ENCODE measurements at regions of chr2 and their contacts with region 1.

Region 1: DNA sequence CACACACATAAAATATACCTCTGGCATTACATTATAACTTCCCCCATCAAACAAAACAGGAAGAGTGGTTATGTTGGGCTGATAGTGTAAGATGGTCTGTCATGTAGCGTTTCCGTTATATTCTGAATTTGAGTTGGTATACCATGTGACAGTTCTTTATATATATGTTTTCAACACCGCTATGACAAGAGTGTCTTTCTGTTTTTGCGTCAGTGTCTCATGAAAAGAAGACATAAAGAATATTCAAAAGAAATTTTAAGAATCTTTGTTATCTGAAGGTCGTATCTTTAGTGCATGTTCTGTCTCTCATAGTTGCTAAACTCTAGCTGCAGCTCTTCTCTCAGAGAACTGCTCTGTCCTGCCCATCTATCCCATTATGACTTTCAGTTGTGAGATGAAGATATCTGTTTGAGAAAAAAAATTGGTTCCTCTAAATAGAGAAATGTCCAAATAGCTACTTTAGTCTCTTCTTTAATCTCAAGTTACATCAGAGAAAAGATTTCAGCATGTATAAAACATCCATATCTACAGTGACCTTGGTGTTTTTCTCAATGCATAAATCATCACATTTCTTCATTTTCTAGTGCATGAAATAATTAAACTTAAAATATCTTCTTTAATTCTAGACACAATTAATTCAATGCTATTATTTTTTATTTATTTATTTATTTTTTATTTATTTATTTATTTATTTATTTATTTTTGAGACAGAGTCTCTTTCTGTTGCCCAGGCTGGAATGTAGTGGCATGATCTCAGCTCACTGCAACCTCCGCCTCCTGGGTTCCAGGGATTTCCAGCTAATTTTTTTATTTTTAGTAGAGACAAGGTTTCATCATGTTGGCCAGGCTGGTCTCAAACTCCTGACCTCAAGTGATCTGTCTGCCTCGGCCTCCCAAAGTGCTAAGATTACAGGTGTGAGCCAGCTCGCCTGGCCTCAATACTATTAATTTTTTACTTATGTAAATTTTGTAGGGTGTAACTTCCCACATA is 24.3 kb upstream of the PSME4 start:
- DNase-seq: peak in 2 of 5 donors; percentile 85
- H3K4me3 ChIP-seq: peak overlapping the region; percentile 43
- H3K4me3 Mint-ChIP-seq: peak overlapping the region; percentile 44 to 79 (median 71)
- H3K27ac ChIP-seq: peak overlapping the region; percentile 62
- H3K27ac Mint-ChIP-seq: peak overlapping the region; percentile 66 to 98 (median 90)
- H3K4me1 ChIP-seq: peaks cover 54% of the 10 kb centered on the region
- H3K4me1 Mint-ChIP-seq: peaks cover 25 to 34% (median 30%) of the 10 kb centered on the region in 3 donors
- H3K27me3 ChIP-seq: no peaks in the 10 kb centered on the region
- H3K27me3 Mint-ChIP-seq: no peaks in the 10 kb centered on the region

Region 2: DNA sequence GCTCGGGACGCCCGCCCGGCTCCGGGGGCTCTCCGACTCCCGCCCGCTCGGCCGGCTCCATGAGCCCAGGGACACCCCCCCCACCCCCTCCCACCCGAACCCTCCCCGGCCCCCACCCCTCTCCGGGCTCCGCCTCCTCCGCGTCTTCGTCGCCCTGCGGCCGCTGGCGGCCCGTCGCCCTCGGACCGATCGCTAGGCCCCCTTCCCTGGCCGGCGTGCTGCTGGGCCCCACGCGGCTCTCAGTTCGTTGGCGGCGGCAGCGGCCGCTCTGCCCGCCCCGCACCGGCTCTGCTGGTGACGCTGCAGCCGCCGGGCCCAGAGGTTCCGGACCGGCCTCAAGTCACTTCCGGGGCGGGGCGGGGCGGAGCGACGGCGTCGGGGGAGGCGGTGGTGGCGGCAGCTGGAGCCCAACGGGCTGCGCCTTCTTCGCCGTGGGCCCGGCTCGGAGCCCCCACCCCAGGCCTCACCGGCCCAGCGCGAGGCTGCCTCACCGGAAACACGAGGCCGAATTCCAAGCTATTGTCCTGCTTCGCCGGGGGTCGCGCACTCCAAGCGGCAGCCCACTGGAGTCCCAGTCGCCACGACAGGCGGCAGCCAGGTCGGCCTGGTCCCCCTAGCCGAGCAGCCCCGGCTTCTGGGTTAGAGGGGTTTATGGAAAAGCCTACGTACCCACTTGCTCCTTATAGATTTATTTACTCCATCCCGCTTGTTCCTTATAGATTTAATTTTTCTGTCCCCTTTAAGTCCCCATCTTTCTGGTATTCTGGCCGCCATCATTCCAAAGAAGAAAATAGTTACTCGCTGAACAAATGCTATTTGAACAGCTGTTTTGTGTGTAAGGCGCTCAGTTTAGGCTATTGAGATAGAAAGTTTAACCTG is 24.1 kb before region 1 on chr2 and contains the start of gene PSME4:
- CTCF ChIA-PET with region 1: interaction called, 9 read pairs
- POLR2A ChIA-PET with region 1: interaction called, 23 read pairs
- DNase-seq: peak; percentile 88 to 95 (median 92)
- H3K4me3 ChIP-seq: peak within 1 kb of the TSS; percentile 87
- H3K4me3 Mint-ChIP-seq: peak within 1 kb of the TSS; percentile 89 to 97 (median 94)
- H3K27ac ChIP-seq: peak within 1 kb of the TSS; percentile 92
- H3K27ac Mint-ChIP-seq: peak within 1 kb of the TSS; percentile 94 to 99 (median 96)
- H3K4me1 ChIP-seq: peaks cover 38% of the 10 kb centered on the region
- H3K4me1 Mint-ChIP-seq: peaks cover 53 to 63% (median 56%) of the 10 kb centered on the region in 3 donors
- H3K27me3 ChIP-seq: no peaks in the 10 kb centered on the region
- H3K27me3 Mint-ChIP-seq: no peaks in the 10 kb centered on the region
- total RNA-seq, gene PSME4: 48.0 to 49.9 TPM

Region 3: DNA sequence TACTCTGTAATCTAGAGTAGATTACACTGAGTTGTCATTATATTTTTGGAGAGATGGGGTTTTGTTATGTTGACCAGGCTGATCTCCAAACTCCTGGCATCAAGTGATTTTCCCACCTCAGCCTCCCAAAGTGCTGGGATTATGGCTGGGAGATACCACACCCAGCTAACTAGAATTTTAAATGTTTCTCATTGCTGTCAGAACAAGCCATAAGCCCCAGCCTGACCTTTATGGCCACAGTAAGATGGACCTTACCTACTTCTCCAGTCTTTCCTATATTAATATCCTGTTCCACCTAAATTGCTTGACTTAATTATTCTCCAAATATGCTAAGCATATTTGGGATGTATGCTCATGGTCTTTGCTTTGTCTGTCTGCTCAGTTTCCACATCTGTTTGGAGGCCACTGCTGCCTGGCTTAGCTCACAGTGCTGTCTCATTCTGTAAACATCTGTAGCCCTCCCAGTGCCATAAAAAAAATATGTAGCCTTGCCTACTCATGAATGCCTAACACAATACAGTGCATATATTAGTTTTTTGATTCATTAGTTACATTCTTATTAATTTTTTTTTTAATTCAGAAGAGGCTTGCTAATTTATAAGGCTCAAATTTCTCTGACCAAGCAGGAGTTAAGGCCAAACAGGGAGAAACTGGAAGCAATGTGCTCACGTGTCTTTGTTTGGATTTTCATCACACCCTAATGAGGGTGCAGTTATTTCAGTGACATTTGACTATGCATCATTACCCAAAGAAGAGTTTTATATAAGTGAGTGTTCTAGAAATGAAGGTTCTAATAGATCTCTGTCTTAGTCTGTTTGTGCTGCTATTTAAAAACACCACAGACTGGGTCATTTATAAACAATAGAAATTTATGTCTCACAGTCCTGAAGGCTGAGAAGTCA is 20.9 kb after region 1 on chr2:
- CTCF ChIA-PET with region 1: interaction called, 6 read pairs
- POLR2A ChIA-PET with region 1: interaction called, 10 read pairs
- DNase-seq: no peak
- H3K4me3 ChIP-seq: no peak overlapping the region
- H3K4me3 Mint-ChIP-seq: no peak overlapping the region
- H3K27ac ChIP-seq: no peak overlapping the region
- H3K27ac Mint-ChIP-seq: peak overlapping the region in 6 of 8 donors; percentile 7 to 77 (median 62)
- H3K4me1 ChIP-seq: peaks cover 22% of the 10 kb centered on the region
- H3K4me1 Mint-ChIP-seq: peaks cover 26 to 36% (median 27%) of the 10 kb centered on the region in 3 donors
- H3K27me3 ChIP-seq: no peaks in the 10 kb centered on the region
- H3K27me3 Mint-ChIP-seq: peaks cover 0 to 1% of the 10 kb centered on the region in 2 donors